ENCODE measurements at regions of chr5 and their contacts with region 1.

Region 1: DNA sequence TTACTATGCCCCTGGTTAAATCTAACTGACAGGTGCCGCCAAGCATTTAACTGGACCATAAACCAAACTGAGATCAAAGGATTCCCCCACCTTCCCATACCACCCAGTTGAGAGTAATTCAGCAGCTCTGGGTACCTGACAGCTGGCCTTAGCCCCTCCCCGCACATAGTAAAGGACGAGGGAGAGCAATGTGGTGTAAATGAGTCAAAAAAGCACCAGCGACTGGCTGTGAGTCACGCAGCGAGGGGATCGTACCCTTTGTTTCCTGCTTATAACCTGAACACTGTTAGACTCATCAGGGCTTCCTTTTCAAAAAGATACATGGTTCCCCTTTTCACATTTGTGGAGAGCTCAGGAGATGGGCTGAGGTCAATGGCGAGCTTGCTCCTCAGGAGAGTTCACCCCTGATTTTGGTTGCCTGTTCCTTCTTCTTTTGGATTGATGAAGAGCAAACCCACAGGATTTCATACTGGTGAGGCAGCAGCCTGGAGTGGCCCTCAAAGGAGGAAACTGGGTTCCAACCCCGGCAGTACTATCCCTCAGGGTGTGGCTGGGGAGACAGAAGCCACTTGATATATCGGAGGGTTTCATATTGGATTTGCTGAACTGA is 71.5 kb downstream of the ANKRD33B start:
- DNase-seq: peak; percentile 93
- H3K4me3 Mint-ChIP-seq: peak overlapping the region; percentile 13
- H3K27ac Mint-ChIP-seq: peak overlapping the region; percentile 79
- H3K4me1 Mint-ChIP-seq: peaks cover 56% of the 10 kb centered on the region
- H3K27me3 Mint-ChIP-seq: no peaks in the 10 kb centered on the region

Region 2: DNA sequence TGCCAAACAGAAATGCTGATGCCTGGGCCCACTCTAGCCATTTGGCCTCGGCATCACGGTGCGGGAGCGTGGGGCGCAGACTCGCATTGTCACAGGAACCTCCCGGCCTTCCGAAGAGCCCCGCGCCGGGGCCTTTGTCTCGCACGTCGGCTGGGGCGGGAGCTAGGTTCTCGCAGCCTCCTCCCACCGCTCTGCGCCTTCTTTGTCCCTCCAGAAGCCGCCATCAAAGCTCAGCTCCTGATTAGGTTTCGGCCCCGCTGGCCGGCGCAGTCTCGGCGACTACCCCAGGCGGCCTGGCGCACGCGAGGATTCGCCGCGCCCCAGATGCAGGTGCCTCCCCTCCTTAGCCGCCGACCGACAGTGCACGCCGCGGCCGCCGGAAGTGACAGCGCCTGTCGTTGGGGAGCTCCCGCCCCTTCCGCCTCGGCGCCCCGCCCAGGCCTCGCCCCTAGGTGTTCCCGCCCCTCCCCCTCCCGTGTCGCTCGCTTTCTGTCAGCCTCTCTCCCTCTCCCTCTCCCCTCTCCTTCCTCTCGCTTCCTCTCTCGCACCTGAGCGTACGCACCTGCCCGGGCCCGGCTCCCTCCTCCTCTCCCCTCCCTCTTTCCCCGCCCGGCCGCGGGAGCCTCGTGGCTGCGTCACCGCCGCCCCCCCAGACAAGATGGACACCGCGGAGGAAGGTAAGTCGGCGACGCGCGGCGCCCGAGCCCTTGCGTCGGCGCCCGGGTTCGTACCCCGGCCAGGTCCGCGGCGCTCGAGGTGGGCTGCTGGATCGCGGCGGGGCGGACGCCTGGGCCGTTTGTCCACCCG is 281.9 kb before region 1 on chr5 and contains the start of gene MARCHF6:
- CTCF ChIA-PET with region 1: no interaction called
- intact Hi-C with region 1: loop called (anchors 1 kb)
- DNase-seq: peak; percentile 96
- H3K4me3 Mint-ChIP-seq: peak within 1 kb of the TSS; percentile 99
- H3K27ac Mint-ChIP-seq: peak within 1 kb of the TSS; percentile 98
- H3K4me1 Mint-ChIP-seq: peaks cover 39% of the 10 kb centered on the region
- H3K27me3 Mint-ChIP-seq: no peaks in the 10 kb centered on the region
- total RNA-seq, gene MARCHF6: 72.5 to 76.8 TPM

Region 3: GRCh38 chr5:10563945-10564837 is 71.2 kb before region 1 on chr5 and contains the start of gene ANKRD33B:
- CTCF ChIA-PET with region 1: no interaction called
- intact Hi-C with region 1: loop called (anchors 2 kb)
- DNase-seq: peak; percentile 85
- H3K4me3 Mint-ChIP-seq: peak within 1 kb of the TSS; percentile 84
- H3K27ac Mint-ChIP-seq: peak within 1 kb of the TSS; percentile 78
- H3K4me1 Mint-ChIP-seq: peaks cover 15% of the 10 kb centered on the region
- H3K27me3 Mint-ChIP-seq: peaks cover 20% of the 10 kb centered on the region
- total RNA-seq, gene ANKRD33B: 1.9 to 2.5 TPM

Region 4: GRCh38 chr5:10761166-10761932 is 126.0 kb after region 1 on chr5 and contains the start of gene DAP:
- CTCF ChIA-PET with region 1: no interaction called
- intact Hi-C with region 1: loop called (anchors 2 kb)
- DNase-seq: peak; percentile 78
- H3K4me3 Mint-ChIP-seq: peak within 1 kb of the TSS; percentile 84
- H3K27ac Mint-ChIP-seq: peak within 1 kb of the TSS; percentile 83
- H3K4me1 Mint-ChIP-seq: peaks cover 41% of the 10 kb centered on the region
- H3K27me3 Mint-ChIP-seq: peaks cover 3% of the 10 kb centered on the region
- total RNA-seq, gene DAP: 29.5 to 29.7 TPM

Measured in activated naive CD4-positive, alpha-beta T cell treated with anti-CD3 and anti-CD28 coated beads for 36 hours (primary cell).